ENCODE measurements at regions of chr1 and their contacts with region 1.

Region 1: GRCh38 chr1:26161415-26162219 is 2.7 kb downstream of the FAM110D start:
- DNase-seq: peak; percentile 43 to 61 (median 47)
- H3K4me3 ChIP-seq: peak overlapping the region; percentile 26 to 75 (median 34)
- H3K4me3 Mint-ChIP-seq: peak overlapping the region; percentile 74 to 92
- H3K27ac ChIP-seq: no peak overlapping the region
- H3K27ac Mint-ChIP-seq: no peak overlapping the region
- H3K4me1 ChIP-seq: peaks cover 22 to 31% of the 10 kb centered on the region in 2 donors
- H3K4me1 Mint-ChIP-seq: peaks cover 22% of the 10 kb centered on the region
- H3K27me3 ChIP-seq: peaks cover 13 to 57% of the 10 kb centered on the region in 2 donors
- H3K27me3 Mint-ChIP-seq: peaks cover 66 to 70% (median 67%) of the 10 kb centered on the region in 3 donors
- CTCF ChIP-seq: peak; percentile 9

Region 2: GRCh38 chr1:25990702-25991395 is 170.8 kb before region 1 on chr1:
- intact Hi-C with region 1: no loop called
- DNase-seq: no peak
- H3K4me3 ChIP-seq: no peak overlapping the region
- H3K4me3 Mint-ChIP-seq: peak overlapping the region; percentile 3 to 84
- H3K27ac ChIP-seq: no peak overlapping the region
- H3K27ac Mint-ChIP-seq: peak overlapping the region in 4 of 7 donors; percentile 13 to 82 (median 34)
- H3K4me1 ChIP-seq: peaks cover 20 to 25% of the 10 kb centered on the region in 2 donors
- H3K4me1 Mint-ChIP-seq: peaks cover 31% of the 10 kb centered on the region
- H3K27me3 ChIP-seq: no peaks in the 10 kb centered on the region
- H3K27me3 Mint-ChIP-seq: peaks cover 0 to 7% (median 0%) of the 10 kb centered on the region in 3 donors
- CTCF ChIP-seq: no peak

Region 3: DNA sequence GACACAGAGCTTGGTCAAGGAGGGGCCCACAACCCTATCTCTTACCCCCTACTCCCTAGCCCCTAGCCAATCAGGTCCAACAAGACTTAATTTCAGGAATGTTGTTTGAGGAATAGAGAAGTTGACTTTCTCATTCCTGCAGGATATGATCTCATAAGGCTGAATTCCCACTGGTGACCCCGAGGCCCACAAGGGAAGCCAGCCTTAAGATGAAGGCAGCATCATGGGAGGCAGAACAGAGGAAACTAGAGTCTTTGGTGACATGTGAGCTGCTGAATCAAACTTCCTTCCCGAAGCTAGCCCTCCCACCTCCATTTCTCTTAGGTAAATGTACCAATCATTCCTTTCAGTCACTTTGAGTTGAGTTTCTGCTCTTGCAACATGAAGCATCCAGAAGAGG is 59.1 kb before region 1 on chr1:
- intact Hi-C with region 1: loop called (anchors 1 to 5 kb)
- DNase-seq: no peak
- H3K4me3 ChIP-seq: no peak overlapping the region
- H3K4me3 Mint-ChIP-seq: no peak overlapping the region
- H3K27ac ChIP-seq: no peak overlapping the region
- H3K27ac Mint-ChIP-seq: no peak overlapping the region
- H3K4me1 ChIP-seq: no peaks in the 10 kb centered on the region
- H3K4me1 Mint-ChIP-seq: peaks cover 5% of the 10 kb centered on the region
- H3K27me3 ChIP-seq: no peaks in the 10 kb centered on the region
- H3K27me3 Mint-ChIP-seq: peaks cover 9 to 15% (median 12%) of the 10 kb centered on the region in 3 donors
- CTCF ChIP-seq: no peak

Region 4: GRCh38 chr1:26126321-26127084 is 35.1 kb before region 1 on chr1:
- intact Hi-C with region 1: loop called in 1 of 2 experiments (anchors 5 kb)
- DNase-seq: peak; percentile 36 to 63 (median 57)
- H3K4me3 ChIP-seq: peak overlapping the region in 2 of 3 experiments; percentile 26 to 62
- H3K4me3 Mint-ChIP-seq: peak overlapping the region; percentile 62 to 71
- H3K27ac ChIP-seq: peak overlapping the region; percentile 69 to 77
- H3K27ac Mint-ChIP-seq: peak overlapping the region; percentile 70 to 90 (median 84)
- H3K4me1 ChIP-seq: peaks cover 61 to 74% of the 10 kb centered on the region in 2 donors
- H3K4me1 Mint-ChIP-seq: peaks cover 68% of the 10 kb centered on the region
- H3K27me3 ChIP-seq: no peaks in the 10 kb centered on the region
- H3K27me3 Mint-ChIP-seq: no peaks in the 10 kb centered on the region
- CTCF ChIP-seq: no peak

Region 5: DNA sequence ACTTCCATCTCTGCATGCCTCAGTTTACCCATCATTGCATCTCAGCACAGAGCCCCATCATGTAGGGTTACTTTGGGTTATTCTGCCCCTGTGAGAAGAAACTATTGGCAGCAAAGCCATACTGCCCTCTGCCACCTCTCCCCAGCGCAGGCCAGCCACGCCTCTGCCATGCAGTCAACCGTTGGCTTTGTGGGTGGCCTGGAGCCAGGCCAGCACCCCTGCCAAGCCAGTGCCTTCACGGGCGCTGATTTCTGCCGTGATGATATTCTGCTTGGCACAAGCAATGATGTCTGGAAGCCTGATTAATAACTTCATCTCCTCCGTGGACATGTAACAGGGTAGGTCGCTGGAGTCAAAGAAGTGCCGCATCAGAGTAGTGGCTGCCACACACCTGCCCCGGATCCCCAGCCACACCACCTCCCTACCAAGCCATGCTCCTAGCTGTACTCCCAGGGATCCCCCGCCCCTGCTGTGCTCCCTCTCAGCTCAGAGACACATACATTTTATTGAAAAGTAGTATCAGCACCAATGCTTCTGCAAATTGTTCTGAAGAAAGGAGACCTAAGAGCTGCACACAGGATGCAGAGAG is 57.4 kb after region 1 on chr1:
- intact Hi-C with region 1: no loop called
- DNase-seq: no peak
- H3K4me3 ChIP-seq: no peak overlapping the region
- H3K4me3 Mint-ChIP-seq: peak overlapping the region in 1 of 2 donors; percentile 28
- H3K27ac ChIP-seq: no peak overlapping the region
- H3K27ac Mint-ChIP-seq: no peak overlapping the region
- H3K4me1 ChIP-seq: no peaks in the 10 kb centered on the region
- H3K4me1 Mint-ChIP-seq: peaks cover 2% of the 10 kb centered on the region
- H3K27me3 ChIP-seq: peaks cover 0 to 2% of the 10 kb centered on the region in 2 donors
- H3K27me3 Mint-ChIP-seq: peaks cover 7 to 24% (median 8%) of the 10 kb centered on the region in 3 donors
- CTCF ChIP-seq: no peak

Region 6: DNA sequence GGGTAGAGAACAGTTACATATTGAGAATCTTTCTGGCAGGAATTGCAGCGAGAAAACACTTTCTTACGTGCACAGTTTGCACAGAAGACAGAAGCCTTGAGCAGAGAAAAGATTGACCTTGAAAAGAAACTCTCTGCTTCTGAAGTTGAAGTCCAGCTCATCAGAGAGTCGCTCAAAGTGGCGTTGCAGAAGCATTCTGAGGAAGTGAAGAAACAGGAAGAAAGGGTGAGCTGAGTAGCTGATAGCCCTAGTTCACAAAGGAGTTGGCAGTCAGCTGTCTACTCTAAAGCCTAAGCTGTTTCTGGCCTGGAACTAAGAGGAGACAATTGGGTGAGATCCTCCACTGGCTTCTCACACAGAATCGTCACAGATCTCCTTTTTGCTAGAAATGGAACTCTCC is 98.0 kb after region 1 on chr1:
- intact Hi-C with region 1: no loop called
- DNase-seq: peak; percentile 75 to 85 (median 77)
- H3K4me3 ChIP-seq: peak overlapping the region in 1 of 3 experiments; percentile 50
- H3K4me3 Mint-ChIP-seq: peak overlapping the region; percentile 21 to 77
- H3K27ac ChIP-seq: peak overlapping the region; percentile 56 to 90
- H3K27ac Mint-ChIP-seq: peak overlapping the region; percentile 78 to 92 (median 89)
- H3K4me1 ChIP-seq: peaks cover 29 to 31% of the 10 kb centered on the region in 2 donors
- H3K4me1 Mint-ChIP-seq: peaks cover 28% of the 10 kb centered on the region
- H3K27me3 ChIP-seq: no peaks in the 10 kb centered on the region
- H3K27me3 Mint-ChIP-seq: peaks cover 0 to under 1% (median 0%) of the 10 kb centered on the region in 3 donors
- CTCF ChIP-seq: no peak